ENCODE measurements at regions of chr3 and their contacts with region 1.

Region 1: DNA sequence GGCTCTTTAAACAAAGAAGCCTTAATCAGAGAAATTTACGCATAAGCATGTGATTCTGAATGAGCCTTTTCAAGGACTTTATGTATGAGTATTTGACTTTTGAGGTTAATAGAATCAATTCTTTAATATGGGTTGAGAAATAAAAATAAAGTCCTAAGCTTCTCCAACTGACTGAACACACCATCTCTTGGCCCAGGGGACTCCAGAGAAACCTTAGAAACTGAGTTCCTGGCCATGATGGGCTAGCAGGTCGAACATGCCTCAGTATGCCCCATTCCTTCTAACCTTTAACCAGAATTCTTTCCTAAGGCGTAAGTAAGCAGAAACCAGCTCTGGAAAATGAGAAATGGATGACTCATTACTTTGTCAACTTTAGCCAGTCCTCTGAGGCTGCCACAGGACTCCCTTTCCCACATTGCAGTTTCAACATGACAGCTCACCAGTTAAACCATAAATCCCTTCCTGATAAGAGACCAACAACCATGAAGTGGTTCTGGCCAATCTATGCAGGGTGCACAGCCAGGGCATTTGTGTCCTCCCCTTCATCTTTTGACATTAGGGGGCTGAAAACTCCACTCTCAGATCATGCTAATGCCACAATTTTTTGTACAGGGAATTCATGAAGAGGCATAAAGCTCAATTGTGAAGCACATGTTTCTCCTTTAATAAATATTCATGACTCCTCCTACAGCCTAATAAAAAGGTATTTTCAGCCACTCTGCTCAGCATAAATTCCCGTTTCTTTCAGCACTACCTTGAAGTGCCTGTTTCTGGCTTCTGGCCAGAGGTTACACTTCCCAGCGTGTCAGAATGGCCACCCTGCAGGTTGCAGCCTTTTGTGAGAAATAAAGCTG is 33.3 kb downstream of the TM4SF18 start:
- DNase-seq: peak; percentile 98
- ATAC-seq: peak; percentile 93
- H3K4me3 ChIP-seq: peak overlapping the region; percentile 35; the same call in 1 of the 2 replicates
- H3K27ac ChIP-seq: peak overlapping the region; percentile 98
- H3K4me1 ChIP-seq: peaks cover 48% of the 10 kb centered on the region
- H3K27me3 ChIP-seq: no peaks in the 10 kb centered on the region
- CTCF ChIP-seq: no peak

Region 2: DNA sequence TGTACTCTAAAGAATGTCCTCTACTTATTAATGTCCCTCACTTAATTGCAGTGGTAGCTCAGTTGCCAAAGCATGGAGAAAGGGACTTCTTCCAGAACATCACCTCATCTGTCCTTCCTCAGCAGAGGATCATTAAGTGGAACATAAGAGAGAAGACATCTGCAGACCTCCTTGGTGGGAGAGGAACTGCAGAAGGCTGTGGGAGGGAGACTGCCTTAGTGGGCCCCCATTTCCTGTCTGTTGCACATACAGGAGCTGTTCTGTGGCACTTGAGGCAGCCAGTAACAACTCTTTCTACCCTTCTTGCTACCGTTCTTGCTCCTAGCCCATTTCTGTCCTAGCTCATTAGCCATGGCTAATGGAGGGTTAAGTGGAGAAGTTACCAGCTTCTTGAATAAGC is 137.1 kb before region 1 on chr3:
- CTCF ChIA-PET with region 1: no interaction called
- POLR2A ChIA-PET with region 1: no interaction called
- intact Hi-C with region 1: no loop called
- DNase-seq: no peak
- ATAC-seq: no peak
- H3K4me3 ChIP-seq: no peak overlapping the region
- H3K27ac ChIP-seq: no peak overlapping the region
- H3K4me1 ChIP-seq: peaks cover 11% of the 10 kb centered on the region; the same call in 1 of the 2 replicates
- H3K27me3 ChIP-seq: no peaks in the 10 kb centered on the region
- CTCF ChIP-seq: no peak

Region 3: DNA sequence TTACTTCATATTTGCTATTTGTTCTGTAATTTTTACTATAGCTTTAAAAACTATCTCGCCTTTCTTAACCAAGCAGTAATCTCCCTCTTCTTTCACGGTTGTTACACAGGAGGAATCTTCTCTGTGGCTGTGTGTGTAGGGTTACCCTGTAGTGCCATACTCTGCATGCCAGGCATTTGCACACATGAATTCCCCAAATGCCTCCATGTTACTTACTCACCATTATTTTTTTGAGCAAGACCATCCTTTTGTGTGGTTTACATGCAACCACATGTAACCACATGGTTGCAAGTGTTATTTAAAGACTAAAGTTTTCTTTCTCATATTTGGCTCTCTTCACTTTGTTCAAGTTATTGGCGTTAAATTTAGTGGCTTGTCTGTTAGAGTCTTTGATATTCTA is 125.3 kb before region 1 on chr3:
- CTCF ChIA-PET with region 1: no interaction called
- POLR2A ChIA-PET with region 1: no interaction called
- intact Hi-C with region 1: no loop called
- DNase-seq: peak; percentile 22
- ATAC-seq: peak; percentile 49
- H3K4me3 ChIP-seq: no peak overlapping the region
- H3K27ac ChIP-seq: peak overlapping the region; percentile 39
- H3K4me1 ChIP-seq: peaks cover 30% of the 10 kb centered on the region
- H3K27me3 ChIP-seq: no peaks in the 10 kb centered on the region
- CTCF ChIP-seq: no peak

Region 4: GRCh38 chr3:149314807-149315578 is 14.8 kb after region 1 on chr3:
- CTCF ChIA-PET with region 1: interaction called, 7 read pairs
- POLR2A ChIA-PET with region 1: no interaction called
- intact Hi-C with region 1: loop called (anchors 2 kb)
- DNase-seq: peak; percentile 87
- ATAC-seq: peak; percentile 78
- H3K4me3 ChIP-seq: no peak overlapping the region
- H3K27ac ChIP-seq: peak overlapping the region; percentile 75
- H3K4me1 ChIP-seq: peaks cover 42% of the 10 kb centered on the region
- H3K27me3 ChIP-seq: no peaks in the 10 kb centered on the region
- CTCF ChIP-seq: no peak

Region 5: GRCh38 chr3:149330609-149331331 is 30.6 kb after region 1 on chr3:
- CTCF ChIA-PET with region 1: no interaction called
- POLR2A ChIA-PET with region 1: interaction called, 5 read pairs
- intact Hi-C with region 1: loop called (anchors 1 kb)
- DNase-seq: peak; percentile 79
- ATAC-seq: peak; percentile 36; the same call in 1 of the 2 replicates
- H3K4me3 ChIP-seq: no peak overlapping the region
- H3K27ac ChIP-seq: peak overlapping the region; percentile 6; the same call in 1 of the 2 replicates
- H3K4me1 ChIP-seq: peaks cover 41% of the 10 kb centered on the region
- H3K27me3 ChIP-seq: no peaks in the 10 kb centered on the region
- CTCF ChIP-seq: no peak

Region 6: DNA sequence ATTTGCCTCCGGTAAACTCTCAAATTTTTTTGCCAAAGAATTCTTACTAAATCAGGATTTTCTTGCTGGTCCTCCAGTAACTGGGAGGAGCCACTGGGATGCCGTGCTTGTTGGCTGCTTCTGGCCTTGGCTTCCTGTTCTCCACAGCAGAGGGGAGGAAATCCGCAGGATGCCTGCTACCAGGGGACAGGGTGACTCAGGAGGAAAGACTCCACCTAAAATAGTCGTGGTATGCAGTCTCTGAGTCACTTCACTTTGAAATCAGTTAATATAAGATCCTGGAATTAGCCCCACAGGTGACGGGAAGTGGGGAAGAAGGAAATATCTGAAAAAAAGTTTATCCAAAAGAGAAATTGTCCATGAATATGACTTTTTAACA is 39.8 kb after region 1 on chr3:
- CTCF ChIA-PET with region 1: interaction called, 3 read pairs
- POLR2A ChIA-PET with region 1: no interaction called
- intact Hi-C with region 1: loop called (anchors 2 kb)
- DNase-seq: peak; percentile 99
- ATAC-seq: peak; percentile 90
- H3K4me3 ChIP-seq: peak overlapping the region; percentile 55
- H3K27ac ChIP-seq: peak overlapping the region; percentile 96
- H3K4me1 ChIP-seq: peaks cover 50% of the 10 kb centered on the region
- H3K27me3 ChIP-seq: no peaks in the 10 kb centered on the region
- CTCF ChIP-seq: no peak

Region 7: GRCh38 chr3:149366941-149367840 is 67.0 kb after region 1 on chr3:
- CTCF ChIA-PET with region 1: no interaction called
- POLR2A ChIA-PET with region 1: no interaction called
- intact Hi-C with region 1: loop called (anchors 1 kb)
- DNase-seq: peak; percentile 99
- ATAC-seq: peak; percentile 77
- H3K4me3 ChIP-seq: 0 out of 2 replicates have a peak overlapping the region, but pooled peaks have one; percentile 27
- H3K27ac ChIP-seq: peak overlapping the region; percentile 99
- H3K4me1 ChIP-seq: peaks cover 66% of the 10 kb centered on the region
- H3K27me3 ChIP-seq: no peaks in the 10 kb centered on the region
- CTCF ChIP-seq: no peak

Region 8: DNA sequence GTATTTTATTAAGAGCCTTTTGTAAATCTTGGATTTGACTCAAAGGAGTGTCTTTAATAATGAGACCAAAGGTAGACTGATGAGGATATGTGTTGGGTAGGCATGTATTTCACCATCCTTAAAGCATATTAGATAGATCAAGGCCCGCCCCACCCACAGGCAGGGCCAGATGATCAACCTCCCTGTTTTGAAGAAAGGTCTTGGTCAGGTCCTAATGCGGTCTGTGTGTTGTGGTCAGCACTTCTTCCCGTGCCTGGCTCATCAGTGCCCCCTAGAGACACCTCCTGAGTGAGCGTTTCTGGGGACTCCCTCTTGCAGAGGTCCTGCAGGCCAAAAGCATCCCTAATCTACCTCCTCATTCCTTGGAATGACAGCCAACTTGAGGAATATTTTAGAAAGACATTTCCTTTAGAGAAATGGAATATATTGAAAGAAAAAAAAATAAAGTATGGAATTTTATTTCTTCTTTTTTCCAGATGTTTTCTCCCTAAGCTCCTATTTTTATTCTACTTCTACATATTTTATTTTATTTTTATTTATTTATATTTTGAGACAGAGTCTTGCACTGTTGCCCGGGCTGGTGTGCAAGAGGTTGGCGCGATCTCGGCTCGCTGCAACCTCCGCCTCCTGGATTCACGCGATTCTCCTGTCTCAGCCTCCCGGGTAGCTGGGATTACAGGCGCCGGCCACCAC is 180.3 kb after region 1 on chr3:
- CTCF ChIA-PET with region 1: no interaction called
- POLR2A ChIA-PET with region 1: no interaction called
- intact Hi-C with region 1: loop called (anchors 1 kb)
- DNase-seq: peak; percentile 94
- ATAC-seq: peak; percentile 96
- H3K4me3 ChIP-seq: no peak overlapping the region
- H3K27ac ChIP-seq: peak overlapping the region; percentile 55
- H3K4me1 ChIP-seq: peaks cover 17% of the 10 kb centered on the region
- H3K27me3 ChIP-seq: no peaks in the 10 kb centered on the region
- CTCF ChIP-seq: peak; percentile 98

Measured in PC-3 (cell line).